HEK293 (cell line): ENCODE measurements at regions of chr7 and their contacts with region 1.

Region 1: DNA sequence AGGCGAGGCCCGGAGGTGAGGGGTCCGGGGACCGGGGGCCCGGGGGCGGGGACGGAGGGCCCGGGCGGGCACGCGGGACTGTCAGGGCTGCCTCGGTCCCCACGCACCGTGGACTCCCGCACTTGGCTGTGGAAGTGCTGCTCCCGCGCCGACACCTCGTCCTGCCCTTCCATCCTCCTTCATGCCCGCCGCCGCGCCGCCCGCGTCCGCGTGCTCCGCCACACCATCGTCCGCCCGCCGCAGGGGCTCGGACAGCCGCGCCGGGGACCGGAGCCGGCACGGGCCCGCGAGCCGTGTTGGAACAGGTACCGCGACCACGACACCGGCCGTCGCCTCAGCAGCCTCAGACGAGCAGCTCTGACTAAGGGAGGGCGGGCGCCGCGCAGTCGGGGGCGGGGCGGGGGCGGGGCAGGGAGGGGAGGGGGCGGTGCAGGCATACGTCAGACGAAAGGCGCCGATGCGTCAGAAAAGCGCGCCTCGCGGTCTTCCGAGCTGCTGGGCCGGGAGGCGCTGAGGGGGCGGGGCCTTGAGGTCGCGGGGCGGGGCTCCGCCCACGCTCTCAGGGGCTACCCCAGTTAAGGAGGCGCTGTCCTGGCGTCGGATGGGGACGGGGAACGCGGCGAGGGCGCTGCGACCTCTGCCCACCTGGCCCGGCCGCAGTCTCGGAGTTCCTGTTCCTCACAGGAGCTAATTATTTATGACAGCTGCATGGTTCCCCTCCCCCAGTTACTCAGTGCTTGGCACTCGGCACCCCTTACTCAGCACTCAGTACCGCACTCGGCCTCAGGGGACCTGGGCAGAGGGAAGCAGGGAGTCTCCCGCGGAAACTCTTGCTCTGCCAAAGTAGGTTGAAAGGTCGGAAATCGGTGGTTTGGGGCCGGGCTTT is at the start of gene LMBR1:
- H3K4me3 ChIP-seq: peak within 1 kb of the TSS; percentile 80
- H3K27ac ChIP-seq: peak within 1 kb of the TSS; percentile 84
- H3K4me1 ChIP-seq: peaks cover 3% of the 10 kb centered on the region; the same call in 1 of the 2 replicates
- CTCF ChIP-seq: peak; percentile 80

Region 2: GRCh38 chr7:156903232-156903909 is 10.3 kb after region 1 on chr7:
- CTCF ChIA-PET with region 1: interaction called, 14 read pairs
- POLR2A ChIA-PET with region 1: interaction called, 5 read pairs
- H3K4me3 ChIP-seq: no peak overlapping the region
- H3K27ac ChIP-seq: no peak overlapping the region
- H3K4me1 ChIP-seq: peaks cover 2% of the 10 kb centered on the region; the same call in 1 of the 2 replicates
- CTCF ChIP-seq: no peak

Region 3: DNA sequence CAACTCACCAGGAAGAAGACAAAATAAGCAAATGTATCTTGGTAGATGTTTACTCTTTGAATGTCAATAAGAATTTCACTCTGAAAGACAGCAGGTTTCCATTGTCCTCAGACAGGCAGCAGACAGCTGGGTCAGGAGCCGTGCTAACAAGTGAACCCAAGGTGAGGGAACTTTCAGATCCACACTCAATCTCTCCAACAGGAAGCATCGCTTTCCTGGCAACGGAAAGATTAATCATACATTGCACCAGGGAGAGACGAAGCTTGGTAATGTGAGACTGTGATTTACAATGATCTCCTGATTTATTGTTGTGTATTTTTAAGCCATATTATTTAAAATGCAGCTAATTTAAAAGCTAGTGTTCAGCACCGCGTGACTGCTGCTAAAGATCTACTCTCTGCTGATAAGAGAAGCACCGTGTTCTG is 38.9 kb after region 1 on chr7:
- CTCF ChIA-PET with region 1: no interaction called
- POLR2A ChIA-PET with region 1: no interaction called
- H3K4me3 ChIP-seq: no peak overlapping the region
- H3K27ac ChIP-seq: no peak overlapping the region
- H3K4me1 ChIP-seq: 0 out of 2 replicates have a peak, but pooled peaks cover 2% of the 10 kb centered on the region
- CTCF ChIP-seq: no peak

Region 4: GRCh38 chr7:157139111-157139809 is 246.2 kb after region 1 on chr7:
- CTCF ChIA-PET with region 1: no interaction called
- POLR2A ChIA-PET with region 1: no interaction called
- H3K4me3 ChIP-seq: peak overlapping the region; percentile 92
- H3K27ac ChIP-seq: peak overlapping the region; percentile 87
- H3K4me1 ChIP-seq: peaks cover 5% of the 10 kb centered on the region
- CTCF ChIP-seq: no peak